ENCODE measurements at regions of chr6 and their contacts with region 1.

Region 1: DNA sequence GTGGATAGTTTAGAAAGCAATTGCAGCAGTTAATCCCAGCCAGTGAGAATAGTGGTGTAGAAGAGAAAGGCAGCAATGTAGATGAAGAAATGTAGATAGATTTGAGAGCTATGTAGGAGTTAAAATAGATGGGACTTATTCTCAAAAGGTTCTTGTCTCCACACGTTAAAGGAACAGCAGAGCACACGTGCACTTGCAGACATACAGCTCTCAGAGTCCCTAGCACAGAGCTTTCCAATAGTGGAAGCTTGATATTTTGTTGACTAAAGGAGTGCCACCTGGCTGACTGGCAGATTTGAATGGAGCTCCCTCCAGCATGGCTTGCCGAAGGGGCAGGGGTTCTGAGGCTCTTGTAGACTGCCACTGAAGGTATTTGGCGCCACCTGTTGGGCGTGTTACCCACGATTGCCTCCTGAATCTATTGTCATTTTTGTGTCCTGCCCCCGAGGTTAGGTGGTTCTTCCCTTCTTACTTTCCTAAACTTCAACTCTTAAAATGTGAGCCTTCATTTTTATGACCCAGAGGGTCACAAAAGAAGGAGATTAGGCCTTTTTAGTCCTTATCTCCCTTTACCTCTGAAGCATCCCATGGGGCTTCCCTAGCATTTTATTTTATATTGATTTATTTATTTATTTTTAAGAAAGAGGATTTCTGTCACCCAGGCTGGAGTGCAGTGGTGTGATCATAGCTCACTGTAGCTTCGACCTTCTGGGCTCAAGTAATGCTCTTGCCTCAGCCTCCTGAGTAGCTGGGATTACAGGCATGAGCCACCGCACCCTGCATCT is 16.4 kb downstream of the BRD2 start:
- DNase-seq: peak; percentile 77

Region 2: GRCh38 chr6:32838114-32838958 is 146.5 kb before region 1 on chr6 and contains the start of gene TAP2:
- CTCF ChIA-PET with region 1: interaction called, 12 read pairs
- POLR2A ChIA-PET with region 1: interaction called, 7 read pairs
- DNase-seq: peak; percentile 93

Region 3: GRCh38 chr6:32885698-32886286 is 99.0 kb before region 1 on chr6:
- CTCF ChIA-PET with region 1: interaction called, 34 read pairs
- POLR2A ChIA-PET with region 1: interaction called, 4 read pairs
- DNase-seq: no peak

Region 4: DNA sequence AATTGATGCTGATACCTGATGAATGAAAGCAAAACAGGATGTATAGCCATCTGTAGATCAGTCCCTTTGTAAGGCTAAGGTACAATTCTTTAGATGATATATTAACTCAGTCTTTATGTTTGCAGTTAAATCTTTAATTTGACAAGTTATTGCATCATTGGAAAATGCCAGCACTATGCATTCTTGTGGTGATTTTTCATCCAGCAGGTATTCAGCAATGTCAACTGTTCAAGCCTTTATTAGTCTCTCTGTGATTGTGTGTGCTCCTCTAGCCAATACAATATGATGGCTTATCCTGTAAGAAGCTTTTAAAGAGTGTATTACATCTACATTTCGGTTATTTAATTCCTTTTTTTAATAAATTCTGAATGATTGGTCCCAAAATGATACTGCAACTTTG is 78.3 kb before region 1 on chr6:
- CTCF ChIA-PET with region 1: interaction called, 10 read pairs
- POLR2A ChIA-PET with region 1: no interaction called
- DNase-seq: no peak

Region 5: GRCh38 chr6:32940656-32941213 is 44.1 kb before region 1 on chr6 and contains the start of gene HLA-DMB:
- CTCF ChIA-PET with region 1: interaction called, 79 read pairs
- POLR2A ChIA-PET with region 1: no interaction called
- DNase-seq: peak; percentile 92

Region 6: GRCh38 chr6:33000055-33000454 is 15.3 kb after region 1 on chr6:
- CTCF ChIA-PET with region 1: interaction called, 12 read pairs
- POLR2A ChIA-PET with region 1: no interaction called
- DNase-seq: peak; percentile 33

Region 7: DNA sequence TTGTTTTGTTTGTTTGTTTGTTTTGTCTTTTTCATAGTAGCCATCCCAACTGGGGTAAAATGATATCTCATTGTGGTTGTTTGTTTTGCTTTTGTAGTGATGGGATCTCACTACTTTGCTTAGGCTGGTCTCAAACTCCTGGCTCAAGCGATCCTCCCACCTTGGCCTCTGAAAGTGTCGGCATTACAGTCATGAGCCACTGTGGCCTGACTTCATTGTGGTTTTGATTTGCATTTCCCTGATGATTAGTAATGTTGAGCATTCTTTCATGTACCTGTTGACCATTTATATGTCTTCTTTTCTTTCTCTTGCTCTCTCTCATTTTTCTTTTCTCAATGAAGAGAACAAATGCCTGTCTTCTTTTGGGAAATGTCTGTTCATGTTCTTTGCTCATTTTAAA is 55.4 kb after region 1 on chr6:
- CTCF ChIA-PET with region 1: no interaction called
- POLR2A ChIA-PET with region 1: no interaction called
- DNase-seq: no peak

Region 8: DNA sequence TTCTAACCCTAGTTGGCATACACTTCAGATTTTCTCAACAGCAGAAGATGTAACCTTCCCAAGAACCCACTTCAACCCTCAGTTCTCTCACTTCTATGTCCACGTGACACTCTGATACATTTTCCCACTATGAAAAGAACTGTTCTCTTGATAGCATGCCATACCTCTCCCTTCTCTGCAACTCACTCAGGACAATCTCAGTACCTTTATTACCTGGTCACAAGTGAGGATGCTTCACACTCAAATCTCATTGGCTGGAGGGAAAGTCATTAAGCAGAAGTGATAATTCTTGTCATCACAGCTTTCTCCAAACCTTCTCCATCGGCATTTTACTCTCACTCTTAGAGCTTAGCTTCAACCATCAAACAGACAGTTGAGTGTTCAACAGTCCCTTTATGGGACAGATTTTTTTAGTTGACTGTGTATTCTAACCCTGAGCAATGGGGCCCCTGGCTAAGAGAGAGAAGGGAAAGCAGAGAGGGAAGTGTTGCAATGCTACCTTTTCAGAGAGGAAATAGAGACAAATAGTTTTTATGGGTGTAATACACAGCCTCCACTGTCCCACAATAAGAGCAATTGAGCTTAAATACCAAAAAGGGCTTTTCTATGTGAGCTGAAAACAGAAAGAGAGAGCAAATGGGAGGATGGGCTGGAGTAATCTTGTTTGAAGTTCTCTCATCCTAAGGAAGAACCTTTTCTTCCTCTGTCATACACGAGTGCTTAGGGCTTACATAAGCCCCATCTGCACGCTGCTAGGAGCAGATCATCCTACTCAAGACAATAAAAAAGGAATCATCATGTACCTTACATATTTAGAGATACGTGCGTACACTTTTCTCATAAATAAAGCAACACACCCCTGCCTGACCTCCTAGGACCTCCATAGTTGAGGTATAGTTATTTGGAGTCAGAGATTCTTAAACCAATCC is 72.7 kb after region 1 on chr6:
- CTCF ChIA-PET with region 1: no interaction called
- POLR2A ChIA-PET with region 1: no interaction called
- DNase-seq: no peak

Region 9: GRCh38 chr6:33213166-33213988 is 228.6 kb after region 1 on chr6:
- CTCF ChIA-PET with region 1: no interaction called
- POLR2A ChIA-PET with region 1: no interaction called
- DNase-seq: no peak

Measured in HEK293T (cell line).